ENCODE measurements at regions of chr11 and their contacts with region 1.

Region 1: GRCh38 chr11:61446211-61446651 is 16.3 kb downstream of the SDHAF2 start:
- DNase-seq: peak; percentile 92
- H3K4me3 Mint-ChIP-seq: no peak overlapping the region
- H3K27ac Mint-ChIP-seq: peak overlapping the region; percentile 74
- H3K4me1 Mint-ChIP-seq: peaks cover 44% of the 10 kb centered on the region
- H3K27me3 Mint-ChIP-seq: no peaks in the 10 kb centered on the region

Region 2: GRCh38 chr11:61369372-61370219 is 76.6 kb before region 1 on chr11:
- CTCF ChIA-PET with region 1: no interaction called
- POLR2A ChIA-PET with region 1: no interaction called
- intact Hi-C with region 1: no loop called
- DNase-seq: no peak
- H3K4me3 Mint-ChIP-seq: no peak overlapping the region
- H3K27ac Mint-ChIP-seq: peak overlapping the region; percentile 60
- H3K4me1 Mint-ChIP-seq: peaks cover 8% of the 10 kb centered on the region
- H3K27me3 Mint-ChIP-seq: no peaks in the 10 kb centered on the region

Region 3: DNA sequence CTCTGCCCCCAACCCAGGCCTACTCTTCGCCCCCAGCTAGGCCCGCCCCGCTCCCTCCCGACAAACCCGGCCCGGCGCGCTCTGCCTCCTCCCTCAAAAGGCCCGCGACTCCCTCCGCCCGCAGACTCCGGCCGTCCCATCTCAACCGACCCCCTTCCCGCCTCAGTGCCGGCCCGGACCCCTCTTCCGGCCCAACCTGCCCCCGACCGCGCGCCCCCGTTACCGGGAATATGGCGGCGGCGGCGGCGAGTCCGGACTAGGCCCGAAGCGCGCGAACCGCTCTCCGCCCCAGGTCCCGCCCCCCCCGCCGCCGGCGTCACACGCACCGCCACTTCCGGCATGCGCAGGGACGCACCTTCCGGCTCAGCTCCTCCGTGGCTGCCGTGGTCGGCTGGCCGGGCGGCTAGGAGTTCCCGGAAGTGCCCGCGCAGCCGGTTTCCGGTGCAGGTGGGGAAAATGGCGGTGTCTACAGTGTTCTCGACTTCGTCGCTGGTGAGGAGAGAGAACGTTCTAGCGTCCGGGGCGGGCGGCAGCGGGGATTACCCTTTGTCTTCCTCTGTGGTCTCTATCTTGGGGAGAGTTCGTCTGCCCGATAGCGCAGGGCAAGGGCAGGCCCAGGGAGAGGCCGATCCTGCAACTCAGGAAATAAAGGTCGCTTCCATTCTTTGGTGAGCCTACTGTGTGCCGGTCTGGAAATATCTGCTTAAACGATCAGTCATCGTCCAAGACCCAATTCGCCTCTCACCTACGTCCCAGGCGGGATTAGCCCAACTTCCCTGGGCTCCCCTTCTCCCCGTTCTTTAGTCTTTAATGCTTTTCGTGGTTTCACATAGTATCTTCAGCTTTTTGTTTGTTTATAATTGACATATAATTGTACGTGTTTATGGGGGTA is 16.3 kb before region 1 on chr11 and contains the starts of genes CPSF7 and SDHAF2:
- CTCF ChIA-PET with region 1: interaction called, 98 read pairs
- POLR2A ChIA-PET with region 1: interaction called, 28 read pairs
- intact Hi-C with region 1: loop called (anchors 1 kb)
- DNase-seq: peak; percentile 99
- H3K4me3 Mint-ChIP-seq: peak within 1 kb of the TSS; percentile 88
- H3K27ac Mint-ChIP-seq: peak within 1 kb of the TSS; percentile 95
- H3K4me1 Mint-ChIP-seq: peaks cover 64% of the 10 kb centered on the region
- H3K27me3 Mint-ChIP-seq: no peaks in the 10 kb centered on the region
- total RNA-seq, gene CPSF7: 90.9 to 100 TPM
- total RNA-seq, gene SDHAF2: 31.4 to 35.4 TPM

Region 4: DNA sequence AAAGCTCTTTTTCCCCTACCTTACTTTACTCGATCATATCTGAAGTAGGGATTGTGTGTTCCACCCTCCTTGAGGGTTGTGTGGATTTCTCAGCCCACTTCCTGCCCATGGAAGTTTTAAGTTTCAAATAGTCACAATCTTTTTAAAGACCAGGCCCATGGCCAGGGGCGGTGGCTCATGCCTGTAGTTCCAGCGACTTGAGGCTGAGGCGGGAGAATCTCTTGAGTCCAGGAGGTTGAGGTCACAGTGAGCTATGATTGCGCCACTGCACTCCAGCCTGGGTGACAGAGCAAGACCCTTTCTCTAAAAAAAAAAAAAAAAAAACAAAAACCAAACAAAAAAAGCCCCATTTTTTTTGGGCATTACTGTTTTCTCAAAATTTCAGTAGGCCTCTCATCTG is 26.1 kb after region 1 on chr11:
- CTCF ChIA-PET with region 1: interaction called, 47 read pairs
- POLR2A ChIA-PET with region 1: no interaction called
- intact Hi-C with region 1: no loop called
- DNase-seq: no peak
- H3K4me3 Mint-ChIP-seq: no peak overlapping the region
- H3K27ac Mint-ChIP-seq: no peak overlapping the region
- H3K4me1 Mint-ChIP-seq: peaks cover 9% of the 10 kb centered on the region
- H3K27me3 Mint-ChIP-seq: no peaks in the 10 kb centered on the region

Region 5: DNA sequence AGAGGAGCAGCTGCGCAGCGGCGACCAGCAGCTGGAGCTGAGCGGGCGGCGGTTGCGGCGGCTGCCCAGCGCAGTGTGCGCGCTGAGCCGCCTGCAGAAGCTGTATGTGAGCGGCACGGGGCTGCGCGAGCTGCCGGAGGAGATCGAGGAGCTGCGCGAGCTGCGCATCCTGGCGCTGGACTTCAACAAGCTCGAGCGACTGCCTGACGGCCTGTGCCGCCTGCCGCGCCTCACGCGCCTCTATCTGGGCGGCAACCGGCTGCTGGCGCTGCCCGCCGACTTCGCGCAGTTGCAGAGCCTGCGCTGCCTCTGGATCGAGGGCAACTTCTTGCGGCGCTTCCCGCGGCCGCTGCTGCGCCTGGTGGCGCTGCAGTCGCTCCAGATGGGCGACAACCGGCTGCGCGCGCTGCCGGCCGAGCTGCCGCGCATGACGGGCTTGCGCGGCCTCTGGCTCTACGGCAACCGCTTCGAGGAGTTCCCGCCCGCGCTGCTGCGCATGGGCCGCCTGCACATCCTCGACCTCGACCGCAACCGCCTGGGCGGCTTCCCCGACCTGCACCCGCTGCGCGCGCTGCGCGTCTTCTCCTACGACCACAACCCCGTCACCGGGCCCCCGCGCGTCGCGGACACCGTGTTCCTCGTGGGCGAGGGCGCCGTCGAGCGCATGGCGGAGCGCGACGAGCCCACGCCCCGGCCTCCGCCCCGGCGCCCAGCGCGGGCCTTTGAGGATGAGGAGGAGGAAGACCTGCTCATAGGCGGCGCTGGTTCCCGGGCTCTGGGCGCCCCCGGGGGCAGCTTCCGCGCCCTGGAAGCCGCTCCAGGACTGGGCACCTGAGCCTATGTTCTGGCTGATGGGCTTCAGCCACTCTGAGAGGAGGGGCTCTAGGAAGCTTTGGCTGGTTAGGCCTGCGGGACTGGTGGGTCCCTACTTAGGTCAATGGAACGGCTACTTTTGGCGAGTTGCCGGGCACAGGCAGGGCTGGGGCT is 63.1 kb after region 1 on chr11:
- CTCF ChIA-PET with region 1: interaction called, 25 read pairs
- POLR2A ChIA-PET with region 1: no interaction called
- intact Hi-C with region 1: loop called (anchors 2 kb)
- DNase-seq: peak; percentile 84
- H3K4me3 Mint-ChIP-seq: peak overlapping the region; percentile 20
- H3K27ac Mint-ChIP-seq: no peak overlapping the region
- H3K4me1 Mint-ChIP-seq: peaks cover 8% of the 10 kb centered on the region
- H3K27me3 Mint-ChIP-seq: peaks cover 44% of the 10 kb centered on the region

Region 6: DNA sequence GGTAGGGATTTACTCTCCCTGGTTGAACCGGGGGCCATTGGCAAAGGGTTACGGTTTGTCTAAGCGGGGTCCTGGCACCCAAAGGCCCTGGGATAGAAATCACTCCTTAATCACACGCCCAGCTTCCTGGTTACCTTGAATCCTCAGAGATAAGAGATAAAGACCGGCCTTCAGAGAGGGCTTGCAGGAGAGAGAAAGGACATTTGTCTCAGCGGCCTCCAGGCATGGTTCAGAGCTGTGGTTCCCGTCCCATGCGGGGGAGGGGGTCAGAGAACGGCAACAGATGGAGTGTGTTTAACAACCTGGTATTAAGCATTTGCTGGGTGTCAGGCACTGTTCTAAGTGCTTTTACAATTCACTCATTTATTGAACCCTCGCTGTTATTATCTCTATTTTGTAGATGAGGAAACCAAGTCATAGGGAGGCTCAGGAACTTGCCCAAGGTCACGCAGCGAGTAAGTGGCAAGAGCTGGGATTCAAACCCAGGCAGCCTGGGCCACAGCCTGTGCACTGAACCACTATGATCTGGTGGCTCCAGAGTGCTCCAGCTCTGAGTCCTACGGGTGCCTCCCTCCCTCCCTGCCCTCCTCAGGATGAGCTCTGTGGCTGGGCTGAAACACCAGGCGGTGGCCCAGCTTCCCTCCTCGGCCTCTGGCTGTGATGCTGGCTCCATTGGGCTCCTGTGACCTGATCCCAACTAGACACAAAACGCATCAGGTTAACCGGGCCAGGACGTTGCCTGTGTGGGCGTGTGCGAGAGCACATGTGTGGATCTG is 80.9 kb after region 1 on chr11:
- CTCF ChIA-PET with region 1: interaction called, 12 read pairs
- POLR2A ChIA-PET with region 1: no interaction called
- intact Hi-C with region 1: no loop called
- DNase-seq: no peak
- H3K4me3 Mint-ChIP-seq: no peak overlapping the region
- H3K27ac Mint-ChIP-seq: no peak overlapping the region
- H3K4me1 Mint-ChIP-seq: no peaks in the 10 kb centered on the region
- H3K27me3 Mint-ChIP-seq: peaks cover 11% of the 10 kb centered on the region

Region 7: GRCh38 chr11:61609980-61610366 is 163.7 kb after region 1 on chr11:
- CTCF ChIA-PET with region 1: no interaction called
- POLR2A ChIA-PET with region 1: no interaction called
- intact Hi-C with region 1: no loop called
- DNase-seq: no peak
- H3K4me3 Mint-ChIP-seq: no peak overlapping the region
- H3K27ac Mint-ChIP-seq: no peak overlapping the region
- H3K4me1 Mint-ChIP-seq: no peaks in the 10 kb centered on the region
- H3K27me3 Mint-ChIP-seq: peaks cover 16% of the 10 kb centered on the region

Region 8: DNA sequence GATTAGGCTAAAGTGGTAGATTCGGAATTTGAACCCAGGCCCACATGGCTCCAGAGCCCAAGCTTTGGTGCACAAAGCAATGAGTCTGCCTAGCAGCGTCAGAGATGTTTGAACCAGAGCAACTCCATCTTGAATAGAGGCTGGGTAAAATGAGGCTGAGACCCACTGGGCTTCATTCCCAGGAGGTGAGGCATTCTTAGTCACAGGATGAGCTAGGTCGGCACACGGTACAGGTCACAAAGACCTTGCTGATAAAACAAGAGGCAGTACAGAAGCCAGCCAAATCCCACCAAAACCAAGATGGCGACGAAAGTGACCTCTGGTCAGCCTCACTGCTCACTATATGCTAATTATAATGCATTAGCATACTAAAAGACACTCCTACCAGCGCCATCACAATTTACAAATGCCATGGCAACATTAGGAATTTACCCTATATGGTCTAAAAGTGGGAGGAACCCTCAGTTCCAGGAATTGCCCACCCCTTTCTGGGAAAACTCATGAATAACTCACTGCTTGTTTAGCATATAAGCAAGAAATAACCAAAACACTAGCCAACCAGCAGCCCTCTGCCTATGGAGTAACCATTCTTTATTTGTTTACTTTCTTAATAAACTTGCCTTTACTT is 193.7 kb after region 1 on chr11:
- CTCF ChIA-PET with region 1: interaction called, 19 read pairs
- POLR2A ChIA-PET with region 1: no interaction called
- intact Hi-C with region 1: no loop called
- DNase-seq: no peak
- H3K4me3 Mint-ChIP-seq: no peak overlapping the region
- H3K27ac Mint-ChIP-seq: no peak overlapping the region
- H3K4me1 Mint-ChIP-seq: no peaks in the 10 kb centered on the region
- H3K27me3 Mint-ChIP-seq: peaks cover 3% of the 10 kb centered on the region